A549 (cell line): ENCODE measurements at regions of chr2 and their contacts with region 1.

Region 1: GRCh38 chr2:197113275-197113711 is 186.8 kb upstream of the PGAP1 start:
- DNase-seq: peak; percentile 24 to 26
- ATAC-seq: peak in 1 of 2 experiments; percentile 74; a peak in 2 of 6 replicates
- H3K4me3 ChIP-seq: no peak overlapping the region
- H3K27ac ChIP-seq: no peak overlapping the region
- H3K4me1 ChIP-seq: peaks cover 7% of the 10 kb centered on the region; the same call in 1 of the 3 replicates
- CTCF ChIP-seq: peak; percentile 87
- EP300 ChIP-seq: no peak
- POLR2A ChIP-seq: no peak
- RAD21 ChIP-seq: peak; percentile 79 to 90

Region 2: GRCh38 chr2:197097578-197098366 is 15.5 kb before region 1 on chr2:
- CTCF ChIA-PET with region 1: interaction called, 10 read pairs
- POLR2A ChIA-PET with region 1: no interaction called
- DNase-seq: no peak
- ATAC-seq: no peak
- H3K4me3 ChIP-seq: no peak overlapping the region
- H3K27ac ChIP-seq: no peak overlapping the region
- H3K4me1 ChIP-seq: no peaks in the 10 kb centered on the region
- CTCF ChIP-seq: no peak
- EP300 ChIP-seq: no peak
- POLR2A ChIP-seq: no peak
- RAD21 ChIP-seq: no peak

Region 3: DNA sequence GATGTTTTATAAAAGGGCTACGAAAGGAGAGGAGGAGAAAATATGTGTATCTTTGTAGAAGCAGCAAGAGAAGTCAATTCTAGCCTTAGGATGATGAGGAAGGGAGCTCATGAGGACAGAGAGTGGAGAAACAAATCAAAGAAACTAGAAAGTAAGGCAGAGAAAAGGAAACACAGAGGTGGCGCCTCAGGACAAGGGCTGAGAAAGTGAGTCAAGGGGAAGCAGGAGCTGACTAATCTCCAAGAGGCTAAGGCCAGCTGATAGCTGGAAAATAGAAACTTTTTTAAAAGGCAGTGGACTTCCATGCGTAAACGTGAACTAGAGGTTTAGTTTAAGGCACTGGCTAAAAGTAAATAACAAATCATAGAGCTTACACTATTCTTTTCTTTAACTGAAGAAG is 23.9 kb after region 1 on chr2:
- CTCF ChIA-PET with region 1: interaction called, 13 read pairs
- POLR2A ChIA-PET with region 1: no interaction called
- DNase-seq: no peak
- ATAC-seq: no peak
- H3K4me3 ChIP-seq: no peak overlapping the region
- H3K27ac ChIP-seq: no peak overlapping the region
- H3K4me1 ChIP-seq: 0 out of 3 replicates have a peak, but pooled peaks cover 9% of the 10 kb centered on the region
- CTCF ChIP-seq: no peak
- EP300 ChIP-seq: no peak
- POLR2A ChIP-seq: no peak
- RAD21 ChIP-seq: no peak

Region 4: DNA sequence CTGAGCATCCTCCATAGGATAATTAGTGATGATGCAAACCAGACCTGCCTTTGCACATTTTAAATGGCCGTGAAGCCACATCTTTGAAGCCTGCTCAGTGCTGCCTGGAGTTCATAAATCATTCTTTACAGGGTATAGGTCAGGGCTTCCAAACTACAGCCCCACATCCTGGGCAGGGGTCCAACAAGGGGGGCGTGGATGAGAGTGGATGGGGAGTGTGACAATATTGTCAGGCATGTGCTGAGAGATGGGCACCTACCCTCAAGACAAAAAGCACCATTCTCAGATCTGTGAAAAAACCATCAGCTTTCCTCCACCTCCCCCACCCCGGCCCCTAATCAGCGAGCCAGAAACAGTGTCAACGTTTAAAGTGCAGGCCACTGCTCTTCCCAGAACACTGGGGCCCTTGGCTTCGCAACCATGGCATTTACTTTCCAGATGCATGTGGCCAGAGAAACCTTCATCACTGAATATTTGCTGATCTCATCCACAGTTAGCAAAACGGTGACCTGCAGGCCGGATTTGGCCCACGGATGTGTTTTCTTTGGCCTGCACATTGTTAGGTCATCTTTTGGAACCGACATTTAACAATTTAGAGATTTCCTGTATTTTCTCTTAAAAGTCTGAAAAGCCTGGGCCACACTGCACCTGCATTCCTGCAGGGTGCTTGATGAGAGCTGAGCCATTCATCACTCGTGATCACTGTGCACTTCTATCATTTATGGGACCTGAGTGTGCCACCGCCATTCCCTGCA is 66.6 kb after region 1 on chr2:
- CTCF ChIA-PET with region 1: interaction called, 16 read pairs
- POLR2A ChIA-PET with region 1: no interaction called
- DNase-seq: peak in 1 of 2 experiments; percentile 11
- ATAC-seq: no peak
- H3K4me3 ChIP-seq: no peak overlapping the region
- H3K27ac ChIP-seq: 0 out of 6 replicates have a peak overlapping the region, but pooled peaks of 1 of the 2 experiments have one; percentile 3
- H3K4me1 ChIP-seq: 0 out of 3 replicates have a peak, but pooled peaks cover 4% of the 10 kb centered on the region
- CTCF ChIP-seq: no peak
- EP300 ChIP-seq: no peak
- POLR2A ChIP-seq: no peak
- RAD21 ChIP-seq: no peak

Region 5: GRCh38 chr2:197363998-197364538 is 250.8 kb after region 1 on chr2:
- CTCF ChIA-PET with region 1: interaction called, 17 read pairs
- POLR2A ChIA-PET with region 1: no interaction called
- DNase-seq: no peak
- ATAC-seq: no peak
- H3K4me3 ChIP-seq: no peak overlapping the region
- H3K27ac ChIP-seq: no peak overlapping the region
- H3K4me1 ChIP-seq: no peaks in the 10 kb centered on the region
- CTCF ChIP-seq: no peak
- EP300 ChIP-seq: no peak
- POLR2A ChIP-seq: no peak
- RAD21 ChIP-seq: no peak

Region 6: GRCh38 chr2:197378494-197379307 is 265.4 kb after region 1 on chr2:
- CTCF ChIA-PET with region 1: interaction called, 32 read pairs
- POLR2A ChIA-PET with region 1: no interaction called
- DNase-seq: peak; percentile 44 to 52
- ATAC-seq: peak; percentile 81 to 86
- H3K4me3 ChIP-seq: peak overlapping the region; percentile 24; the same call in 1 of the 3 replicates
- H3K27ac ChIP-seq: no peak overlapping the region
- H3K4me1 ChIP-seq: no peaks in the 10 kb centered on the region
- CTCF ChIP-seq: peak; percentile 93
- EP300 ChIP-seq: no peak
- POLR2A ChIP-seq: no peak
- RAD21 ChIP-seq: peak; percentile 96 to 97